ENCODE measurements at regions of chr11 and their contacts with region 1.

Region 1: GRCh38 chr11:107770551-107770951 is 58.7 kb upstream of the SLN start:
- DNase-seq: no peak
- ATAC-seq: peak; percentile 41
- H3K4me3 ChIP-seq: no peak overlapping the region
- H3K27ac ChIP-seq: no peak overlapping the region; the same call in 1 of the 2 replicates
- H3K4me1 ChIP-seq: 0 out of 2 replicates have a peak, but pooled peaks cover 4% of the 10 kb centered on the region
- H3K27me3 ChIP-seq: no peaks in the 10 kb centered on the region
- CTCF ChIP-seq: no peak
- EP300 ChIP-seq: no peak
- POLR2A ChIP-seq: no peak
- RAD21 ChIP-seq: no peak

Region 2: DNA sequence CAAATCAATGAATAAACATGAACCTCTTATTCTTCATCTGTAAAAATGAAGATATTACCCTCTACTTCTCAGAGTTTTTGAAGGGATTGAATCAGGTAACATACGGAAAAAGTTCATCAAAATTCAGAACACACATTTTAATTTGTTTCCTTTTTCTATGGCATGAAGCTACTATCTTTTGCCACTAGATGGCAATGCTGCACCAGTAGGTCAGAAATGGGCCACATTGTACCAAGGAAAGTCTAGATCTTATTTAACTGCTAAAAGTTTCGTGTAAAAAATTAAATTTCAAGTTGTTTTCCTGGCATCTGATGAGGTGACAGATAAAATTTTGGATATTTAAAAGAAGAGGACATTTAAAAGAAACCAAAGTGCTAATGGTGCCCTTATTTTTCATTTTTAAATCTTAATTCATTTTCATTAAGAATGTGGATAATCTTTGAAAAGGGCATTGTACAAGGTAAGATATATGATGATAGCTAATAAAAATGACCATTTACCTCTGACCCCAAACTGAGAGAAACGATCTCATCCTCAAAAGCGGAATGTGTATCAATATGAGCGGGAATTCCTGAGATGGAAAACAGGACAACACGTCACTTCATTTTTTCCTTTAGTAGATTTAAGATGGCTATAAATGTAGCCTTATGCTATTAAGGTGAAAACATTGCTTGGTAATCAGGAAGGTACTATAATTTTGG is 221.1 kb before region 1 on chr11:
- CTCF ChIA-PET with region 1: interaction called, 16 read pairs
- POLR2A ChIA-PET with region 1: no interaction called
- RAD21 ChIA-PET with region 1: interaction called, 10 read pairs
- SMC1A ChIA-PET with region 1: interaction called, 9 read pairs
- in situ Hi-C with region 1: no loop called
- intact Hi-C with region 1: no loop called
- DNase-seq: no peak
- ATAC-seq: peak; percentile 78
- H3K4me3 ChIP-seq: no peak overlapping the region
- H3K27ac ChIP-seq: no peak overlapping the region
- H3K4me1 ChIP-seq: no peaks in the 10 kb centered on the region
- H3K27me3 ChIP-seq: no peaks in the 10 kb centered on the region
- CTCF ChIP-seq: peak; percentile 67 to 74 (median 71)
- EP300 ChIP-seq: no peak
- POLR2A ChIP-seq: no peak
- RAD21 ChIP-seq: peak; percentile 81

Region 3: DNA sequence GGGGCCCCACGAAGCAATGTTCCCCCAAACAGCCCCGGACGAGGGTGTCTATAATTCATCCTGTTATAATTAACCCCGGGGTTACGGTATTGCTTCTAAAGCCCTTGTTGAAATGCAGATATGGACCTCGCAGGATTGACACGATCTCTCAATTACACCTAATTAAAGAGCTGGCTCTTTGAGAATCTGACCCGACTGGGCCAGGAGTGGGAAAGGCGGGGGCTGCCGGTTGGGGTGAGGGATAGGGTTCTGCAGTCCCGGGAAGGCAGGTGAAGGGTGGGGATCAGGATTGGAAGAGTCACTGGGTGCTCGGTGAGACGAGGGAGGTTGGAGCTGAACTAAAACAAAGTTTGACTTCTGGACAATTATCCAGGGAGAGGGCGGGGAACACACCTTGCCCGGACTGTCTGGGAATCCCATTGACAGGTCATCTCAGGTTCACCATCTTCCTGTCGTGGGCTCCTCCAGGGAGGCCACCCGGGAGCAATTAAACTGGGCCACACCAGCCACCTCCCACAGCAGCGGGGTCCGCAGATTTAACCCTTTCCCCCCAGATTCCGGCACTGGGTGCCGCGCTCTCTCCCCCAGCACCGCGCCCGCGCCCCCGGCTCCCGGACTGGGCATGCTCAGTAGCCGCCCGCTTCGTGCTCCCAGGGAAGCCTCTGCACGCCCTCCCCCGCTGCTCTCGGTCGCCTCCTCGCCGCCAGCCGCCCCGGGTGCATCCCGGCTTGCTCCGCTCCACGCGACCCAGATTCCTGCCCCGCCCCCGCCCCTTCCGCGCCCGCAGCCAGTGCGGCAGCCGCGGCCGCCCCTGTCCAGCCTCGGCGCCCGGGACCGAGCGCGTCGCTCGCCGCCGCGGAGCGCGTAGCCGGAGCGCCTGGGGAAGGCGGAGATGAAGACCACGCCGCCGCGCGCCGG is 179.8 kb before region 1 on chr11 and contains the start of gene ELMOD1:
- CTCF ChIA-PET with region 1: interaction called, 17 read pairs
- POLR2A ChIA-PET with region 1: no interaction called
- RAD21 ChIA-PET with region 1: no interaction called
- SMC1A ChIA-PET with region 1: interaction called, 3 read pairs
- in situ Hi-C with region 1: no loop called
- intact Hi-C with region 1: no loop called
- DNase-seq: no peak
- ATAC-seq: peak; percentile 76
- H3K4me3 ChIP-seq: peak within 1 kb of the TSS; percentile 66; the same call in 1 of the 2 replicates
- H3K27ac ChIP-seq: no peak within 1 kb of the TSS
- H3K4me1 ChIP-seq: no peaks in the 10 kb centered on the region
- H3K27me3 ChIP-seq: peaks cover 10 to 22% of the 10 kb centered on the region in 2 experiments
- CTCF ChIP-seq: no peak
- EP300 ChIP-seq: no peak
- POLR2A ChIP-seq: no peak
- RAD21 ChIP-seq: no peak
- polyA plus RNA-seq, gene ELMOD1: not detected

Region 4: DNA sequence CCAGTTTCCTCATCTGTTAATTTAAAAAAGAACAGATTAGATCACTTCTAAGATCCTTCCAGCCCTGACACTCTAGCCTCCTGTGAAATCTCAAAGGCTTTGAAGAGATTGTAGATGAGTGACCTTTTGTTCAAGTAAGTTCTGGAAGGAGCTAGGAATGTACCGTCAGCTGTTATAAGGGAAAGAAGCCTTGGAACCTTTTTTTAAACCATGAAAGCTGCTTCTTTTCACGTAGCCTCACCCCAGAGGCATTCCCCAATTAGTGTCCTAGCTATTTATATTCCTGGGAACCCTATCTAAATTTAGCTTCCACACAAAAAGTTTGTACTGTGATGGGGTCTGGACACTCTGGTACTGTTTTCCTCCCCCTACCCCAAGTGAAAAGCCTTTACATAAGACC is 22.9 kb before region 1 on chr11:
- CTCF ChIA-PET with region 1: interaction called, 96 read pairs
- POLR2A ChIA-PET with region 1: no interaction called
- RAD21 ChIA-PET with region 1: no interaction called
- SMC1A ChIA-PET with region 1: interaction called, 4 read pairs
- in situ Hi-C with region 1: no loop called
- intact Hi-C with region 1: no loop called
- DNase-seq: no peak
- ATAC-seq: no peak
- H3K4me3 ChIP-seq: no peak overlapping the region
- H3K27ac ChIP-seq: no peak overlapping the region
- H3K4me1 ChIP-seq: no peaks in the 10 kb centered on the region
- H3K27me3 ChIP-seq: no peaks in the 10 kb centered on the region; a peak in 1 of 4 replicates
- CTCF ChIP-seq: no peak
- EP300 ChIP-seq: no peak
- POLR2A ChIP-seq: no peak
- RAD21 ChIP-seq: no peak

Region 5: DNA sequence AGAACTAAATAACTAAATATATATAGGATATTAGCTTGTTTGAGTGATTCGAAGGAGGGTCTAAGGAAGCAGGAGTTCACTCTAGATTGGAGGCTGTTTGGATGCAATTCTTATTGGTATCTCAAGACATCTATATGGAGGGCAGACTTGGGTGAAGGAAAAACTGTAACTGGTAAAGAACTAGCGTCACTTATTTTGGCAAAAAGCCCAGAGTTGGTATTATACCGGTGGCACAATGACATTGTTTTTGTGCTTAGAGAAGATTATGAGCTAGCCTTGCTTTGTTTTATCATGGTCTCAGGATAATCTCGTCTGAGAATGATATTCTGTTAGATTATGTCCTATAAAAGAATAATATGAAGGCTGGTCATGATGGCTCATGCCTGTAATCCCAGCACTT is 94.0 kb after region 1 on chr11:
- CTCF ChIA-PET with region 1: interaction called, 12 read pairs
- POLR2A ChIA-PET with region 1: no interaction called
- RAD21 ChIA-PET with region 1: no interaction called
- SMC1A ChIA-PET with region 1: no interaction called
- in situ Hi-C with region 1: no loop called
- intact Hi-C with region 1: no loop called
- DNase-seq: no peak
- ATAC-seq: no peak; the same call in 2 of the 3 replicates
- H3K4me3 ChIP-seq: no peak overlapping the region
- H3K27ac ChIP-seq: peak overlapping the region; percentile 29; the same call in 1 of the 2 replicates
- H3K4me1 ChIP-seq: peaks cover 16% of the 10 kb centered on the region
- H3K27me3 ChIP-seq: no peaks in the 10 kb centered on the region
- CTCF ChIP-seq: no peak
- EP300 ChIP-seq: no peak
- POLR2A ChIP-seq: no peak
- RAD21 ChIP-seq: no peak